Endothelial cell of umbilical vein (primary cell): ENCODE measurements at regions of chr1 and their contacts with region 1.

Region 1: GRCh38 chr1:156226116-156226538 is 13.3 kb downstream of the PMF1 start:
- DNase-seq: no peak
- H3K4me3 ChIP-seq: no peak overlapping the region
- H3K27ac ChIP-seq: no peak overlapping the region
- H3K4me1 ChIP-seq: peaks cover 6% of the 10 kb centered on the region
- H3K27me3 ChIP-seq: no peaks in the 10 kb centered on the region
- CTCF ChIP-seq: no peak
- POLR2A ChIP-seq: no peak

Region 2: DNA sequence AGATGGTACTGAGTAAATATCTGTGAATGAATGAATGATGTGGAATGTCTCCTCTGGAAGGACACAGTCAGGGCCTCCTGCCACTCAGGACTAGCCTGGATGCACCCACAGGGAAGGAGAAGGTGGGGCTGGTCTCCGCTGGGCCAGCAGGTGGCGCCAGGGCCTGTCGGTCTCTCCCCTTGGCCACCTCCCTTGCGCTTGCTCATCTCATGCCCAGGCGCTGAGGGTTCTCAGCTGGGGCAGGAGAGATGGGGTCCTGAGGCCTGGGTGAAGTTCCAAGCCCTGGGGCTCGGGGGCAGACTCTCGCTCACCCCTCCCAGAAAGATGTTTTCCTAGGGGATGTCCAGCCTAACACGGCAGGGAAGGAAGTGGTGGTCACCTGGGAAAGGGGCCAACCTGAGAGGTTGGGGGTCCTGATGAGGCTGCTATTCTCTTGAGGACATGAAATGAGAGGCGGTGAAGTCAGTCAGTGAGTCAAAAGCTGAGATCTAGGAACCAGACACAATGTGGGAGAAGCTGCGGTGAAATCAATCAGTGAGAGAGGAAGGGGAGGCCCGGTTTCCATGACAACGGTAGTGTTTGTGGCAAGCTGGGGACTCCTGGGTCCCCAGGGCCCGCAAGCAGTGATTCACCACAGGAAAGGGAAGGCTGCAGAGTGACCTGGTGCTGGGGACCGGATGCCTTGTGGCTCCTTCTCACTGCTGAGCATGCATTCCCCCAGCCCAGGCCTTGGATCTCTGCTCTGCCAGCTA is 129.3 kb before region 1 on chr1:
- CTCF ChIA-PET with region 1: interaction called, 51 read pairs
- POLR2A ChIA-PET with region 1: no interaction called
- dilution Hi-C with region 1: no loop called
- intact Hi-C with region 1: no loop called
- DNase-seq: peak; percentile 93
- H3K4me3 ChIP-seq: no peak overlapping the region
- H3K27ac ChIP-seq: peak overlapping the region; percentile 92
- H3K4me1 ChIP-seq: peaks cover 36% of the 10 kb centered on the region
- H3K27me3 ChIP-seq: no peaks in the 10 kb centered on the region
- CTCF ChIP-seq: peak; percentile 96 to 99
- POLR2A ChIP-seq: peak; percentile 65

Region 3: GRCh38 chr1:156140879-156141252 is 85.3 kb before region 1 on chr1:
- CTCF ChIA-PET with region 1: interaction called, 489 read pairs
- POLR2A ChIA-PET with region 1: interaction called, 8 read pairs
- dilution Hi-C with region 1: loop called (anchors 10 kb)
- intact Hi-C with region 1: loop called (anchors 1 kb)
- DNase-seq: no peak
- H3K4me3 ChIP-seq: no peak overlapping the region
- H3K27ac ChIP-seq: no peak overlapping the region
- H3K4me1 ChIP-seq: no peaks in the 10 kb centered on the region
- H3K27me3 ChIP-seq: no peaks in the 10 kb centered on the region
- CTCF ChIP-seq: no peak
- POLR2A ChIP-seq: no peak

Region 4: GRCh38 chr1:156160743-156161171 is 65.4 kb before region 1 on chr1:
- CTCF ChIA-PET with region 1: interaction called, 33 read pairs
- POLR2A ChIA-PET with region 1: interaction called, 3 read pairs
- dilution Hi-C with region 1: no loop called
- intact Hi-C with region 1: no loop called
- DNase-seq: peak; percentile 78
- H3K4me3 ChIP-seq: no peak overlapping the region
- H3K27ac ChIP-seq: peak overlapping the region; percentile 9
- H3K4me1 ChIP-seq: peaks cover 20% of the 10 kb centered on the region
- H3K27me3 ChIP-seq: no peaks in the 10 kb centered on the region
- CTCF ChIP-seq: no peak
- POLR2A ChIP-seq: no peak

Region 5: DNA sequence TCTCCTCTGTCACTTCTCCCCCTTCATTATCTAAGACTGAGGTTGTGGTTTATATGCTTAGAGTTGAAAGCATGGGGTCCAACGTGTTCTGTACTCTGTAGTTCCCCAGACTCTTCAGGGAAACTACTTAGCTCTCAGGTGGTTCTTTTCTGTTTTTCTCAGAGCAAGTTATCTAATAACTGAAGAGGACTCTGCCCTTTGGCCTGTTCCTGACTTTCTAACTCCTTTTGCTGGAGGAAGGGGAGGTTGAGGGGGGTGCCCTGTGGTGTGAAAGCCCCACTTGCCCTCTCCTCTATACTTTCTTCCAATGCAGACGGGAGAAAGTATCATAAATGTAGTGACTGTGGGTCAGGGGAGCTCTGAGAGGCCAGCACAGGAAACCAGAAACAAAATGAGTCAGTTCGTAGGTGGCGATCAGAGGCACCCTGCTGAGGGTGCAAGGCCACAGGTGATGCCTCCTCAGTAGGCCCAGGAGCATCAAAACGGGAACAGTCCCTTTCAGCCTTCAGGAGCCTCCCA is 27.2 kb before region 1 on chr1:
- CTCF ChIA-PET with region 1: interaction called, 20 read pairs
- POLR2A ChIA-PET with region 1: interaction called, 3 read pairs
- dilution Hi-C with region 1: no loop called
- intact Hi-C with region 1: loop called (anchors 5 kb)
- DNase-seq: no peak
- H3K4me3 ChIP-seq: no peak overlapping the region
- H3K27ac ChIP-seq: no peak overlapping the region
- H3K4me1 ChIP-seq: peaks cover 11% of the 10 kb centered on the region
- H3K27me3 ChIP-seq: no peaks in the 10 kb centered on the region
- CTCF ChIP-seq: no peak
- POLR2A ChIP-seq: no peak

Region 6: DNA sequence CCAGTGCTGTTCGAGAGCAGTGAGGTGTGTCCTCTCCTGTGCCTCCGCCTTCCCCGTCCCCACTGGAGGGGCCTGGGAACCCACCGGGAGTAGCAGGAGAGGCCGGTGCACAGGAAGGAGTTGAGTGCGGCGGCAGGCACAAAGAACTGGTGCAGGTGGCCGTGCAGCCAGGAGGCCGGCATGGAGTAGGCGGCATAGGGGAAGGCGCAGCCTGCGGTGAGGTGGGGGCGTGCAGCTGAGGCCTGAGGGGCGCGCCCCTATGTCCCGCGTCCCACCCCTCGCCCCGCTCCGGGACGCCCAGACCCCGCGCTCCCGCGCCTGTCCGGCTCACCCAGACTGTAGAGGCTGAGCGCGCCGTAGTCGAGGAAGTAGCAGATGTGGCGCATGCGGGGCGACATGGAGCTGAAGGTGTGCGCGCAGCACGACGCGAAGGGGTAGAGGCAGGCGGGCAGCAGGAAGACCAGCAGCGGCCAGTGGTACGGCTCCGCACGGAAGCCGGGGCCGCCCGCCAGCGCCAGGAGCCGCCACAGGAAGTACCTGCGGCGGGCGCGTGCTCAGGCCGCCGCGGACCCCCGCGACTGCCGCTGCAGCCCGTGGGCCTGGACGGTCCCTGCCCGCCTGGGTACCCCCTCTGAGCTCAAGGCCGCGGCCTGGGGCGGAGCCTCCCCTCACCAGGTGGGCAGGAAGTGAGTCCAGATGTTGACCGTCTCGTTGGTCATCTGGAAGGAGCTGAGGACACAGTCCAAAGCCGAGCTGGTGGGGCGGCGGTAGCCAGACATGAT is 19.5 kb after region 1 on chr1:
- CTCF ChIA-PET with region 1: interaction called, 17 read pairs
- POLR2A ChIA-PET with region 1: no interaction called
- dilution Hi-C with region 1: no loop called
- intact Hi-C with region 1: no loop called
- DNase-seq: peak; percentile 31
- H3K4me3 ChIP-seq: peak overlapping the region in 1 of 3 experiments; percentile 29
- H3K27ac ChIP-seq: no peak overlapping the region
- H3K4me1 ChIP-seq: peaks cover 6% of the 10 kb centered on the region
- H3K27me3 ChIP-seq: peaks cover 0 to 4% of the 10 kb centered on the region in 2 experiments
- CTCF ChIP-seq: no peak
- POLR2A ChIP-seq: no peak

Region 7: GRCh38 chr1:156751758-156752757 is 525.9 kb after region 1 on chr1:
- CTCF ChIA-PET with region 1: no interaction called
- POLR2A ChIA-PET with region 1: no interaction called
- dilution Hi-C with region 1: no loop called
- intact Hi-C with region 1: no loop called
- DNase-seq: peak; percentile 97
- H3K4me3 ChIP-seq: peak overlapping the region; percentile 30 to 94 (median 73)
- H3K27ac ChIP-seq: peak overlapping the region; percentile 60
- H3K4me1 ChIP-seq: peaks cover 42% of the 10 kb centered on the region
- H3K27me3 ChIP-seq: no peaks in the 10 kb centered on the region
- CTCF ChIP-seq: peak in 1 of 2 donors; percentile 29
- POLR2A ChIP-seq: peak; percentile 72